Activated CD8-positive, alpha-beta memory T cell treated with anti-CD3 and anti-CD28 coated beads, Interleukin-2, amount 10 ng/mL, durations not matched to agents 7 days and 5 days (primary cell): ENCODE measurements at regions of chr16 and their contacts with region 1.

Region 1: GRCh38 chr16:5615868-5616642 is 518.5 kb upstream of the EEF2KMT start:
- DNase-seq: peak; percentile 45
- ATAC-seq: peak; percentile 55
- H3K4me3 Mint-ChIP-seq: peak overlapping the region; percentile 37
- H3K27ac Mint-ChIP-seq: no peak overlapping the region
- H3K4me1 Mint-ChIP-seq: peaks cover 4% of the 10 kb centered on the region
- H3K27me3 Mint-ChIP-seq: peaks cover 8% of the 10 kb centered on the region

Region 2: GRCh38 chr16:5633845-5634440 is 17.9 kb after region 1 on chr16:
- CTCF ChIA-PET with region 1: interaction called, 13 read pairs
- DNase-seq: no peak
- ATAC-seq: no peak
- H3K4me3 Mint-ChIP-seq: no peak overlapping the region
- H3K27ac Mint-ChIP-seq: no peak overlapping the region
- H3K4me1 Mint-ChIP-seq: no peaks in the 10 kb centered on the region
- H3K27me3 Mint-ChIP-seq: no peaks in the 10 kb centered on the region